ENCODE measurements at regions of chr20 and their contacts with region 1.

Region 1: DNA sequence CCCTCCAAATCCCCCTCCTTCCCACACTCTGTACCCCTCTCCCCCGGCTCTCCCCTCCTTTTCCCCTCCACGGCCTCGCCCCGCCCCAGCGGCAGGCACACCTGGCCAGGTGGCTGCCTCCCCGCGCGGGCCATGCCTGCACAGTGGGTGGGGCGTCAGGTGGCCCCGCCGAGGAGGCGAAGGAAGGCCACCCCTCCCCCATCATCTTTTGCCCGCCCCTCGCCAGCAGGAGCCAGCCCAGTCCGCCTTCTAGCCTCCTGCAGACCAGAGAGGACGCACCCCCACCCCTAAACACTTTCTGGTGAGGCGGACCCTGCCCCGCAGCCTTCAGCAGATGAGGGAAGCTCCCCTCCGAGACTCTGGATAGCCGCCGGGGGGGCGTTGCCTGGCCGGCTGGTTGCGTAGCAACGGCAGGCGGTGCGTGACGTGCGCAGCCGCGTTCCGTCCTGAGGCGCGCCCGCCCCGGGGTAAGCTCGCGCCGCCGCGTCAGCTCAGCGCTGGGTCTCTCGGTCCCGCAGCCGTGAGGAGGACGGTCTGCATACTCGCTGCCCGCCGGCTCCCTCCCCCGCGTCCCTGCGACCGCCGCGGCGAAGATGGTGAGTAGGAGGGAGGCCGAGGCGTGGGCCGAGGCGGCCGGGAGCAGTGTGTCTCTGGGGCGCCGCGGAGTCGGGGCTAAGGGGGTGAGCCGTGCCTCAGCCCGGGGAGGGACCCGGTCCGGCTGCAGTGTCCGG is at the start of gene DSTN:
- DNase-seq: peak; percentile 95
- H3K4me3 ChIP-seq: peak within 1 kb of the TSS; percentile 84 to 92 (median 88)
- H3K27ac ChIP-seq: peak within 1 kb of the TSS; percentile 91
- H3K4me1 ChIP-seq: peaks cover 23% of the 10 kb centered on the region
- H3K27me3 ChIP-seq: no peaks in the 10 kb centered on the region
- CTCF ChIP-seq: no peak
- POLR2A ChIP-seq: peak; percentile 87
- total RNA-seq, gene DSTN: 300 and 307 TPM in 2 replicates

Region 2: GRCh38 chr20:17473659-17474058 is 96.1 kb before region 1 on chr20:
- CTCF ChIA-PET with region 1: no interaction called
- POLR2A ChIA-PET with region 1: no interaction called
- dilution Hi-C with region 1: no loop called
- intact Hi-C with region 1: no loop called
- DNase-seq: no peak
- H3K4me3 ChIP-seq: no peak overlapping the region
- H3K27ac ChIP-seq: no peak overlapping the region
- H3K4me1 ChIP-seq: no peaks in the 10 kb centered on the region
- H3K27me3 ChIP-seq: peaks cover 0 to 5% of the 10 kb centered on the region in 2 experiments
- CTCF ChIP-seq: no peak
- POLR2A ChIP-seq: no peak

Region 3: GRCh38 chr20:17504898-17505635 is 64.7 kb before region 1 on chr20:
- CTCF ChIA-PET with region 1: interaction called, 4 read pairs
- POLR2A ChIA-PET with region 1: no interaction called
- dilution Hi-C with region 1: no loop called
- intact Hi-C with region 1: loop called (anchors 2 kb)
- DNase-seq: peak; percentile 72
- H3K4me3 ChIP-seq: peak overlapping the region; percentile 31 to 74 (median 58)
- H3K27ac ChIP-seq: peak overlapping the region; percentile 9
- H3K4me1 ChIP-seq: peaks cover 13% of the 10 kb centered on the region
- H3K27me3 ChIP-seq: no peaks in the 10 kb centered on the region
- CTCF ChIP-seq: peak; percentile 39 to 41
- POLR2A ChIP-seq: peak; percentile 61

Region 4: DNA sequence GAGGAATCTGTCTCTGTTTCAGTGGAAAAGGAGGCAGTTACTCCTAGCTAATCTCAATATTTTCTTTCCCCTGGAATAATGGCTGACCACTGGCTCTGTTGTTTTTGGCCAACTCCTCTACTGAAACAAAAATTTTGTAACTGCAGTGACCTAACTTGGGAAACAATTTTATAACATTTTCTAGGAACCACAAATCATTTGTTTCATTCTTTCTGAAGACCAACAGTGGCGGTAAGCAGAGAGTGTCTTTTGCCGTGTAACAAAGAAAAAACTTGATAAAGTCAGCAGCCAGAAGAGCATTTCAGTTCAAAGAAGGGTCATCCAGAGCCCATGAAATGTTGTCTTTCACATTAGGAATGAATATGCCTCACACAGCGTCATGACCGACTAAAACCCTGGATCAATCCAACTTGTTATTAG is 26.8 kb before region 1 on chr20:
- CTCF ChIA-PET with region 1: interaction called, 14 read pairs
- POLR2A ChIA-PET with region 1: interaction called, 8 read pairs
- dilution Hi-C with region 1: no loop called
- intact Hi-C with region 1: no loop called
- DNase-seq: peak; percentile 67
- H3K4me3 ChIP-seq: no peak overlapping the region
- H3K27ac ChIP-seq: no peak overlapping the region
- H3K4me1 ChIP-seq: no peaks in the 10 kb centered on the region
- H3K27me3 ChIP-seq: no peaks in the 10 kb centered on the region
- CTCF ChIP-seq: no peak
- POLR2A ChIP-seq: no peak

Region 5: DNA sequence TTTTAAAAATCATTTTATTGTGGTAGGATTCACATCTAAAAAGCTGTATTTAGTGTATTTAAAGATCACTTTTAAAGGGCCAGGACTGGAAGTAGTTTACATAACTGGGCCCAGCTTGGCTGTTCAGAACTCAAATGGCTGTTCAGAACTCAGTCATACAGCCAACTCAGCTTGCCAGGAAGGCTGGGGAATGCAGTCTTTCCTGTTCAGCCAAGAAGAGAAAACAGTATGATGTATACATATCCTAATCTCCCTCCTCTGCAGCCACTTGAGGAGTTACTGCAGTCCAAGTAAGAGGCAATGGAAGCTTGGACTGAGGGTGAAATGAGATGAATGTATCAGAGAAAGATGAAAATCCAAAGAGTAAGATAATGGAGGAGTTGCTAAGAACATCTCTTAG is 24.7 kb after region 1 on chr20:
- CTCF ChIA-PET with region 1: interaction called, 13 read pairs
- POLR2A ChIA-PET with region 1: interaction called, 8 read pairs
- dilution Hi-C with region 1: no loop called
- intact Hi-C with region 1: loop called (anchors 1 kb)
- DNase-seq: peak; percentile 89
- H3K4me3 ChIP-seq: no peak overlapping the region
- H3K27ac ChIP-seq: peak overlapping the region; percentile 9
- H3K4me1 ChIP-seq: peaks cover 21% of the 10 kb centered on the region
- H3K27me3 ChIP-seq: no peaks in the 10 kb centered on the region
- CTCF ChIP-seq: no peak
- POLR2A ChIP-seq: no peak

Region 6: GRCh38 chr20:17611540-17612286 is 41.9 kb after region 1 on chr20:
- CTCF ChIA-PET with region 1: interaction called, 12 read pairs
- POLR2A ChIA-PET with region 1: interaction called, 8 read pairs
- dilution Hi-C with region 1: no loop called
- intact Hi-C with region 1: loop called (anchors 1 kb)
- DNase-seq: no peak
- H3K4me3 ChIP-seq: no peak overlapping the region
- H3K27ac ChIP-seq: peak overlapping the region; percentile 15
- H3K4me1 ChIP-seq: no peaks in the 10 kb centered on the region
- H3K27me3 ChIP-seq: no peaks in the 10 kb centered on the region
- CTCF ChIP-seq: peak; percentile 28 to 49
- POLR2A ChIP-seq: no peak

Region 7: DNA sequence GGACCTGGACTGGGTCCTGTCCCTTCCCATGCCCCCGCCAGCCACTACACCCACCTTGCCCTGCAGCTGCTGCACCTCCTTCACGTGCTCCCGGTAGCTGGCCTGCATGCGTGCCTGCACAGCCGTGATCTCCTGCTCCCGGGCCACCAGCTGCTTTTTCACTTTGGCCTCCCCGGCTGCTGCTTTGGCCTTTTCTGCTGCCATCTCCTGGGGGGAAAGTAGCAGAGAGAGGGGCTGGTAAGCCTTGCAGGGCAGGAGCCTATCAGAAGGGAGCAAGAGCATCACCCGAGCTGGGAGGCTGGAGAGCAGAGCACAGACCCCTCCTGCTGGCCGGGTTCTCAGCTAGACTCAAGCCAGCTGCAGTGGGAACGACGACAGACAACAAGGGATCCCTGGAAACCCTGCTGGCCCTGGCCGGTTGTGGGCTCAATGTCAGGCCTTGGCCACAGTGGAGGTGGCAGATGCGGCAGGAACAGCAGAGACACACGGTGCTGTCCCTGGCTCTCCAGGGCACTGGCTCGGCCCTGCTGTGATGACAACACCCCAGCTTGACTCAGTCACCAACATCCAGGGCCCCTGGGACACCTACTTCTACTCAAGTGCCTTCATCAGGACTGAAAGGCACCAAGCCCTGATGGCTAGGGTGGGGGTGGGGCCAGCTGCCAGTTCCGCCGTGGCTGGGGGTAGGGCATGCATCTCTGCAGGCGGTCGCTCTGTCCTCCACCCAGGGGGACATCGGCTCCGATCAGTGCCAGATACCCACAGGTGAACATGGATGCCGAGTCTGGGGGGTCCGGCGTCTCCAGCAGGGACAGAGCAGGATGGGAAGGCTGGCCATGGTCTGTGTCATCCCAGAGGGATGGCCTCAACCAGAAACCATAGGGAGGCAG is 67.0 kb after region 1 on chr20:
- CTCF ChIA-PET with region 1: no interaction called
- POLR2A ChIA-PET with region 1: no interaction called
- dilution Hi-C with region 1: no loop called
- intact Hi-C with region 1: no loop called
- DNase-seq: no peak
- H3K4me3 ChIP-seq: no peak overlapping the region
- H3K27ac ChIP-seq: no peak overlapping the region
- H3K4me1 ChIP-seq: no peaks in the 10 kb centered on the region
- H3K27me3 ChIP-seq: no peaks in the 10 kb centered on the region
- CTCF ChIP-seq: no peak
- POLR2A ChIP-seq: no peak

Measured in endothelial cell of umbilical vein (primary cell).